AG04450 (cell line): ENCODE measurements at regions of chr16 and their contacts with region 1.

Region 1: DNA sequence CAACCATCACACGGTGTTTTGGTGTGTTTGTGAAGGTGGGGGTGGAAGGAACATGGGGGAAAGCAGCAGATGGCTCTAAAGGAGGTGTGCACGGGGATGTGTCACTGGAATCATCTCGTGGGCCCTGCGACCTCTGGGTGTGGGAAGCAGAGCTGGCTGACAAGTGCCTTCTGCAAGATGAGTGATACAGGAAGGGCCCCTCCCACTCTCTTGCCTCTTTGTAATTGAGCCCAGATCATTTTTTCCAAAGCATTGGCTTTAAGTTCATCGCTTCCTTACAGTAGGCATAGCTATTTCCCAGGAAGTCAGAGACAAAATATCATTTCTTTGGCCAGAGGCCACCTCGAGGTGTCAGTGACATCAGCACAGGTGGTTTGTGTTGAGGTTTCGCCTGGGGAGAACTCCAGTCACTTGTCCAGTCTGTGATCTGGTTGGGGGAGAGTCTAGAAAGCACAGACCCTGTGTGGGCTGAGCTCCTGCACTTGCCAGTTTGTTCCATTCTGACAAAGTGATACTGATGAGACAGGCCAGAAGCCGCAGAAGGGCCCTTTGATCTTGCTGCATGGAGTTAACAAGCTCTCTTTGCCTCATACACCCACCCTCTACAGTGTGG is 20.6 kb upstream of the SNTB2 start:
- DNase-seq: peak; percentile 29
- H3K4me3 ChIP-seq: no peak overlapping the region
- H3K27ac ChIP-seq: peak overlapping the region; percentile 49
- H3K27me3 ChIP-seq: no peaks in the 10 kb centered on the region
- CTCF ChIP-seq: no peak

Region 2: DNA sequence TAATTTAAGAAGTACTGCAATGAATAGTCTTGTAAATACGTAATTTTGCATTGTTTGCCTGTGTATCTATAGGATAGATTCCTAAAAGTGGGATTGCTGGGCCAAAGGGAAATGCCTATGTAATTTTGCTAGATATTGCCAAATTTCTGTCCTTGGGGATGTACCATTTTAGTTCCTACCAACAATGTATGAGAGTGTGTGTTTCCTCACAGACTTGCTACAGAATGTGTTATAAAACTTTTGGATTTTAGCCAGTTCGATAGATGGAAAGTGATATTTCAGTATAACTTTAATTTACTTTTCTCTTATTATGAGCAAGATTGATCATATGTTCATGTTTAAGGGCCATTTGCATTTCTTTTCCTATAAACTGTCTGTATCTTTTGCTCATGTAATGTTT is 314.7 kb before region 1 on chr16:
- CTCF ChIA-PET with region 1: no interaction called
- POLR2A ChIA-PET with region 1: no interaction called
- DNase-seq: no peak
- H3K4me3 ChIP-seq: no peak overlapping the region
- H3K27ac ChIP-seq: no peak overlapping the region
- H3K27me3 ChIP-seq: no peaks in the 10 kb centered on the region
- CTCF ChIP-seq: no peak

Region 3: GRCh38 chr16:69150146-69150865 is 16.0 kb before region 1 on chr16:
- CTCF ChIA-PET with region 1: interaction called, 16 read pairs
- POLR2A ChIA-PET with region 1: no interaction called
- DNase-seq: peak; percentile 65
- H3K4me3 ChIP-seq: no peak overlapping the region
- H3K27ac ChIP-seq: no peak overlapping the region
- H3K27me3 ChIP-seq: no peaks in the 10 kb centered on the region
- CTCF ChIP-seq: peak; percentile 82

Region 4: DNA sequence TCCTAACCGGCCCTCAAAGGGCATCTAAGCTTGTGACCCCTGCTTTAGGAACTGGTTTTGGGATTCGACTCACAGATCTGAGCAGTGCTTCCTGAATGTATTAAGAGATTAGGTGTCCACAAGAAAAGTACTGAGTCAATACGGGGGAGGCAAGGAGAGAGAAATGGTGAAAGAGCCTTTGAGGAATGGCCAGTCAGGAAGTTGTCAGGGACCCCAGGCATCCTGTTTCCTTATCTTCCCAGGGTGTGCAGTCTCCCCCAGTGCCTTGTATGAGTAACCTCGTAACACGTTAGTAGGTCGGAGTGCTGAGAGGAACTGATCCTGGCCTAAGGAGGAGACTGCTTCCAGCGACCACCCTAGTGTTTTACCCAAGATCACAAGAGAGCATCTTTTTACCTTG is 201.7 kb after region 1 on chr16:
- CTCF ChIA-PET with region 1: no interaction called
- POLR2A ChIA-PET with region 1: no interaction called
- DNase-seq: no peak
- H3K4me3 ChIP-seq: no peak overlapping the region
- H3K27ac ChIP-seq: peak overlapping the region; percentile 22
- H3K27me3 ChIP-seq: no peaks in the 10 kb centered on the region
- CTCF ChIP-seq: no peak